ENCODE measurements at regions of chr10 and their contacts with region 1.

Region 1: GRCh38 chr10:50538555-50539398 is 85.0 kb downstream of the SGMS1 start:
- DNase-seq: peak in 2 of 9 experiments; percentile 30 to 45
- ATAC-seq: peak; percentile 40
- H3K4me3 ChIP-seq: no peak overlapping the region
- H3K4me3 Mint-ChIP-seq: no peak overlapping the region
- H3K27ac ChIP-seq: no peak overlapping the region
- H3K27ac Mint-ChIP-seq: no peak overlapping the region
- H3K4me1 ChIP-seq: peaks cover 12% of the 10 kb centered on the region
- H3K4me1 Mint-ChIP-seq: peaks cover 52% of the 10 kb centered on the region
- H3K27me3 ChIP-seq: no peaks in the 10 kb centered on the region
- H3K27me3 Mint-ChIP-seq: no peaks in the 10 kb centered on the region
- CTCF ChIP-seq: no peak

Region 2: DNA sequence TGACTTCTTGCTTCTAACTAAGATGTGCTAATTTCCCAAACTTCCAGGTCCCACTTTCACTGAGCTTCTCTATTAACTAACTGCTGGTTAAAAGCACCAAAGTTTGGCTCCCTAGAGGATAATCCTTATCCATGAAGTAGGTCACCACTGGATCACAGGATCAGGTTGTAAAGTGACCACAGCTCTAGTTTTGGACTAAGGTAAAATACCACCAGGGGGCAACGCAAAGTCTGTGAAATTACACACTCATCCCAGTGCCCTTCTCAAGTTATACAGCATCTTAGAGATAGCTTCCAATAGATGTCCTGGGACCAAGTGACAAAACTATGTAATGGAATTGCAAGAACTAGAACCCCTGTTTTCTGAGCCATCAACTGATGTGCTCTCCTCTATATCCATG is 171.0 kb before region 1 on chr10:
- CTCF ChIA-PET with region 1: no interaction called
- POLR2A ChIA-PET with region 1: no interaction called
- intact Hi-C with region 1: no loop called
- DNase-seq: peak in 2 of 9 experiments; percentile 15 to 37
- ATAC-seq: no peak
- H3K4me3 ChIP-seq: no peak overlapping the region
- H3K4me3 Mint-ChIP-seq: no peak overlapping the region
- H3K27ac ChIP-seq: no peak overlapping the region
- H3K27ac Mint-ChIP-seq: no peak overlapping the region
- H3K4me1 ChIP-seq: no peaks in the 10 kb centered on the region
- H3K4me1 Mint-ChIP-seq: peaks cover 12% of the 10 kb centered on the region
- H3K27me3 ChIP-seq: no peaks in the 10 kb centered on the region
- H3K27me3 Mint-ChIP-seq: no peaks in the 10 kb centered on the region
- CTCF ChIP-seq: no peak

Region 3: DNA sequence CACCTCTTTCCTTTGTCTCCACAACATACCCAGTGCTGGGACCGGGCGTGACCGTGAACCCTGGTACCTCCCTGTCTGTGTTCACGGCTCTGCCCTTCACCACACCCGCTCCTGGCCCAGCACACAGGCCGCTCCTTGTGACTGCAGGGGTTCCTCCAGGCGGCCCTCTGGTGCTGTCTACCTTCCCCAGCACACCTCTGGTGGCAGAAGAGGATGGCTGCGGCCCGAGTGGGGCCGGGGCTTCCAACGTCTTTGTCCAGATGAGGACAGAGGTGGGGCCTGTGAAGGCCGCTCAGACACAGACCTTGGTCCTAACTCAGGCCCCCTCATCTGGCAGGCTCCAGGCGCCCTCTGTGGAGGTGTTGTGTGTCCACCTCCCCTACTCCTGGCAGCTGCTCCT is 140.4 kb after region 1 on chr10:
- CTCF ChIA-PET with region 1: no interaction called
- POLR2A ChIA-PET with region 1: no interaction called
- intact Hi-C with region 1: no loop called
- DNase-seq: no peak
- ATAC-seq: no peak
- H3K4me3 ChIP-seq: no peak overlapping the region
- H3K4me3 Mint-ChIP-seq: no peak overlapping the region
- H3K27ac ChIP-seq: no peak overlapping the region
- H3K27ac Mint-ChIP-seq: no peak overlapping the region
- H3K4me1 ChIP-seq: no peaks in the 10 kb centered on the region
- H3K4me1 Mint-ChIP-seq: no peaks in the 10 kb centered on the region
- H3K27me3 ChIP-seq: no peaks in the 10 kb centered on the region
- H3K27me3 Mint-ChIP-seq: no peaks in the 10 kb centered on the region
- CTCF ChIP-seq: no peak

Region 4: GRCh38 chr10:52226197-52226847 is 1687.5 kb after region 1 on chr10:
- CTCF ChIA-PET with region 1: no interaction called
- POLR2A ChIA-PET with region 1: no interaction called
- intact Hi-C with region 1: loop called in 1 of 2 experiments (anchors 5 kb)
- DNase-seq: no peak
- ATAC-seq: no peak
- H3K4me3 ChIP-seq: no peak overlapping the region
- H3K4me3 Mint-ChIP-seq: no peak overlapping the region
- H3K27ac ChIP-seq: no peak overlapping the region
- H3K27ac Mint-ChIP-seq: no peak overlapping the region
- H3K4me1 ChIP-seq: no peaks in the 10 kb centered on the region
- H3K4me1 Mint-ChIP-seq: no peaks in the 10 kb centered on the region
- H3K27me3 ChIP-seq: no peaks in the 10 kb centered on the region
- H3K27me3 Mint-ChIP-seq: no peaks in the 10 kb centered on the region
- CTCF ChIP-seq: no peak